AG04449 (cell line): ENCODE measurements at regions of chr6 and their contacts with region 1.

Region 1: DNA sequence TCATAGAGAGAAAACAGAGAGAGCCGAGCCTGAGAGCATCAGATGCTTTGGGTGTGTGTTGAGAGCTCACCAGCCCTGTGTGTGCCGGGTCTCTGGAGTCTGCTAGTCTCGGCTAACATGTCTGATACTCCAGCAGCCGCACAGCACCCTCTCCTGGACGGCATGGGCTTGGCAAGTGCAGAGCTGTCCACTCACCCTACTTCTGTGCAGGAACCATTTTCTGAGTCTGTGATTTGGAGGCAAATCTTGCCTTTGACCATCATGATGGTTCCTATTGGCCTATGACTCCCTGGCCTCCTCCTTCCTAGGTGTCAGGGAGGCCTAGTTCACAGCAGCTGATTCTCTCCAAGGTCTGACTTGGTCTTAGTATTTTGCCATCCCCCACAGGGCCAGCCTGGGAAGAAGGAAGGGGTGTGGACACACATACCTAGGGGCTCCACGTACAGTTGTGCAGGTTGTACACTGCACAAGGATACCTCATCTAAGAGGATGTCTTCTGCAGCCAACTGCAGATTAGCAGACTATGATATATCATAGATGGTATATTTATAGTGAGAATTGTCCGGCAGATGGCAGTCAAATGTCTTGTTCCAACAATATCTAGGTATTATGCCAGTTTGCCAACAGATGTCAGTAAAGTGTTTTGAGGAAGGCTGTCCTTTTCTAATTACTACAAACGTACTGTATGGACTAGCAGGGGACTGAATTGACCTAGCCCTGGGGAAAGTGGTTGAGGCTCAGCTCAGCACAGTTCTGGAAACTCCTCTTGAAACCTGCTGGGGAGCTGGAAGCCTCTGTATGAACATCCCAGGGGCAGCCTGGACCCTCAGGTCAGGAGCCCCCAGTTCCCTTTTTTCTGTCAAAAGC is 13.0 kb downstream of the FGD2 start:
- DNase-seq: peak; percentile 42
- H3K4me3 ChIP-seq: no peak overlapping the region
- CTCF ChIP-seq: peak; percentile 96

Region 2: DNA sequence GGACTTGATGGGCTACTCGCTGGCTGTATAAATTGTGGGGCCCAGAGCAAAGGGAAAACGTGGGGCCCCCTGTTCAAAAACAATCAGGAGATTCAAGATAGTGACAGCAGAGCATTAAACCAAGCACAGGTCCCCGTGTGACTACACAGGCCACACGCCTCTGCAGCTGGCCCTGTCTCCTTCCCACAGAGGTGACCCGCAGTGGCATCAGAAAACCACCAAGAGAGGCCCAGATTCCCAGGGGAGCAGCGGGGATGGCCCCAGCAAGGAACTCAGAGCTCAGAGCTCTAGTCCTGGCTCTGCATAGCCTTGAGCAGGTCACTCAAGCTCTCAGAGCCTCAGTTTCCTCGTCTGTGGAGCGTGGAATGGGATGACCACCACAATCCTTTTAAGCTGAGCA is 236.8 kb before region 1 on chr6:
- CTCF ChIA-PET with region 1: interaction called, 521 read pairs
- POLR2A ChIA-PET with region 1: no interaction called
- DNase-seq: no peak
- H3K4me3 ChIP-seq: no peak overlapping the region
- CTCF ChIP-seq: no peak

Region 3: DNA sequence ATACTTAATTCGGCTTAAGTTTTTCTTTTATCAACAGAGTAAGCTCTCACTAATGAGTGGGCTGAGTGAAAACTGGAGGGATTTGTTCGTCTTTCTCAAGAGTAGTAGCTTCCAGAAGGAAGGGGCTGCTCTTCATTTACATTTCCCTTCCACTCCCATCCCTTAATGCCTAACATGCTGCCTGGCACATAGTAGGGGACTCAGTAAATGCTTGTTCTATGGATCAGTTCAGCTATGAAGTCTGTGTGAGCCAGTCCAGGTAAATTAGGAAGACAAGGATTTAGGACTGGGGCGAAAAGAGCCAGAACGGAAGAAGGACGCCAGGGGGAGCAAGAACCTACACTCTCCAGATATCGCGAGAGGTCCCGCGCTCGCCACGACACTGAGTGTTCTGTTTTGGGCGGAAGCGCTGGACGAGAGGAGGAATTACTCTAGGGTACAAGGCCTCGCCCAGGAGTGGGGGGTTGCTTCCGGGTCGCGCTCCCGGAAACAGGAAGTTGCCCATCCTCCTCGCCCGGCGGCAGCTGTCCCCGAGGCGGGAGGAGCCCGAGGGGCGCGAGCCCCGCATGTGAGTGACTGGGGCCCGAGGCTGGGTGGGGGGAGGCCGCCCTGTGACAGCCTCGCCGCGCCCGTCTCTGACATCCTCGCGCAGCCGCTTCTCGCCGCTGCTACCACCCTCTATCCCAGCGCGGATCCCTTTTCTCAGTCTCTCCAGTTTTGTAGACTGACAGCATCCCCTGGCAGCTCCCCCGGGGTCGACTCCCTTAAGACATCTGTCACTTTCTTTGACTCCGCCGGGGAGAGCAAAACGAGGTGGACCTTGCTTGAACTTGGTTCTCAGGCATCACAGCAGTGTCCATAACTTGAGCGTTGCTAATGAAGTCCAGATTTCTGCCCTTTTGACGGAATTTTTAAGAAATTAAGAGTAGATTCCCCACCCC is 132.7 kb before region 1 on chr6 and contains the start of gene C6orf89:
- CTCF ChIA-PET with region 1: interaction called, 270 read pairs
- POLR2A ChIA-PET with region 1: interaction called, 3 read pairs
- DNase-seq: peak; percentile 77
- H3K4me3 ChIP-seq: peak within 1 kb of the TSS; percentile 86
- CTCF ChIP-seq: peak; percentile 81

Region 4: DNA sequence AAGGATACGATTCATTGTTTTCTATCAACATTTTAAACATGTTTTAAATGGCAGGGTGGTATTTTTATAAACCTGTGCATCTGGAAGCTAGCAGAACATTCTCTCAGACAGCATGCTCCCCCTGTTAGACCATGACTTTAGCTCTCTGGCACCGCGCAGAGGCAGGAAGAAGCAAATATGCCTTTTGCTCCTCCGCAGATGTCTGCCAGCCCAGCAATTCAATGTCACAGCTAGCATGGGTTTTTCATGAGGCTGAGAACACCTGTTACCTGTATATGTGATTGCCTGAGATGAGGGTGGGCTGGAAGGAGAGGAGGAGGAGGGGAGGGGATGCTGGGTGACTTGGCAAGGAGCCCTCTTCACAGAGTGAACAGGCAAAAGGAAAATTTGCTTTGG is 39.1 kb before region 1 on chr6:
- CTCF ChIA-PET with region 1: interaction called, 21 read pairs
- POLR2A ChIA-PET with region 1: interaction called, 3 read pairs
- DNase-seq: no peak
- H3K4me3 ChIP-seq: no peak overlapping the region
- CTCF ChIP-seq: peak; percentile 86

Region 5: DNA sequence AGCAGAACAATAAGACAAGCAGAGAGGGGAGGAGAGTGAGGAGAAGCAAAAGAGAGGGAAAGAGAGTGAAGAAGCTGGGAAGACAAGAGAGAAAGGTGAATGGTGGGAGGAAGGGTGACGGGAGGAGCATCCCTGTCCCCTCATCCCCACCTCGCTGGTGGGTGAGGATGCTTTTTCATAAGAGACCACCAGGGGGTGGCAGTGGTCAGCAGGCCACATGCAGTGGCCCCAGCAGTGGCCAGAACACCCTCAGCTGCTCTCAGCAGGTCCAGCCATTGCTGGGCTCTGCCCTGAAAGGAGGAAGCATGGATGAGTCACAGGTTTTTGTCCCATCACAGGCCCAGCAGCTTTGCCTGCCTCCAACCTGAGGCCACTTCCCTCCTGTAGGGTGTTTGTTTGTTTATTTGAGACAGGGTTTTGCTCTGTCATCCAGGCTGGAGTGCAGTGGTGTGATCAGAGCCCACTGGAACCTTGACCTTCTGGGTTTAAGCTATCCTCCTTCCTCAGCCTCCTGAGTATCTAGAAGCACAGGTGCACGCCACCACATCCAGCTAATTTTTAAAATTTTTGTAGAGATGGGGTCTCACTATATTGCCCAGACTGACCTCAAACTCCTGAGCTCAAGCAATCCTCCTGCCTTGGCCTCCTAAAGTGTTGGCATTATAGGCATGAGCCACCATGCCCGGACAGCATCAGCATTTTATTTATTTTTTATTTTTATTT is 11.0 kb after region 1 on chr6:
- CTCF ChIA-PET with region 1: interaction called, 182 read pairs
- POLR2A ChIA-PET with region 1: no interaction called
- DNase-seq: no peak
- H3K4me3 ChIP-seq: no peak overlapping the region
- CTCF ChIP-seq: peak; percentile 79

Region 6: DNA sequence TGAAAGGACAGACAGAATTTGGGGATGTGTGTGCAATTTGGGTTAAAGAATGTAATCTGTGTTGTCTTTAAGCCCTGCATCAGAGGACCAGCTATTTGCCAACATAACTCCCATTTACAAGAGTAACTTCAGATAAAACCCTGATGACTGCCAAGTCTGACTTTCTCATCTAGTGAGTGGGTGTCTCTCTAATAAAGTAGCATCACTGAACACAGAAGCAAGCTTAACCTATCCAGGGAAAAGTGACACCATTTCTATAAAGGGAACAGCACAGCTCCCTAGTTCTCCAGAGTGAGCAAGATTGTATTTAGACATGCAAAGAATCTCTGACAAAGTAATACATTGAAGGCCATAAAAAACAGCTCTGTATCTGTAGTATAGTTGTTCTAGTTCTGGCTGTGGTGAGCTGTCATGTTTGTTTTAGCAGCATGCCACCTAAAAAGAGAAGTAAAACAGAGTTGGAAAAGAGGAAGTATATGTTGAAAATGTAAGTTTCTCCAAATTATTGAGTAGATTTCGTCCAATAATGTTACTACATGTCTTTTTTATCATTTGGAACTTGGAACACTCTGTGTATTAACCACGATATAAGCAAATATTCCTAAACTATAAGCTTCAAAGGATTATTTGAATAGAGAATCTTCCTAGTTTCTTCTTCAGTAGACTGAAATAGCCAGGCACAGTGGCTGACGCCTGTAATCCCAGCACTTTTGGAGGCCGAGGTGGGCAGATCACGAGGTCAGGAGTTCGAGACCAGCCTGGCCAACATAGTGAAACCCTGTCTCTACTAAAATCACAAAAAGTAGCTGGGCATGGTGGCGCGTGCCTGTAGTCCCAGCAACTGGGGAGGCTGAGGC is 142.7 kb after region 1 on chr6:
- CTCF ChIA-PET with region 1: interaction called, 18 read pairs
- POLR2A ChIA-PET with region 1: no interaction called
- DNase-seq: peak; percentile 64
- H3K4me3 ChIP-seq: no peak overlapping the region
- CTCF ChIP-seq: no peak

Region 7: GRCh38 chr6:37222125-37222967 is 203.9 kb after region 1 on chr6:
- CTCF ChIA-PET with region 1: interaction called, 1,706 read pairs
- POLR2A ChIA-PET with region 1: no interaction called
- DNase-seq: no peak
- H3K4me3 ChIP-seq: peak overlapping the region; percentile 64
- CTCF ChIP-seq: no peak

Region 8: DNA sequence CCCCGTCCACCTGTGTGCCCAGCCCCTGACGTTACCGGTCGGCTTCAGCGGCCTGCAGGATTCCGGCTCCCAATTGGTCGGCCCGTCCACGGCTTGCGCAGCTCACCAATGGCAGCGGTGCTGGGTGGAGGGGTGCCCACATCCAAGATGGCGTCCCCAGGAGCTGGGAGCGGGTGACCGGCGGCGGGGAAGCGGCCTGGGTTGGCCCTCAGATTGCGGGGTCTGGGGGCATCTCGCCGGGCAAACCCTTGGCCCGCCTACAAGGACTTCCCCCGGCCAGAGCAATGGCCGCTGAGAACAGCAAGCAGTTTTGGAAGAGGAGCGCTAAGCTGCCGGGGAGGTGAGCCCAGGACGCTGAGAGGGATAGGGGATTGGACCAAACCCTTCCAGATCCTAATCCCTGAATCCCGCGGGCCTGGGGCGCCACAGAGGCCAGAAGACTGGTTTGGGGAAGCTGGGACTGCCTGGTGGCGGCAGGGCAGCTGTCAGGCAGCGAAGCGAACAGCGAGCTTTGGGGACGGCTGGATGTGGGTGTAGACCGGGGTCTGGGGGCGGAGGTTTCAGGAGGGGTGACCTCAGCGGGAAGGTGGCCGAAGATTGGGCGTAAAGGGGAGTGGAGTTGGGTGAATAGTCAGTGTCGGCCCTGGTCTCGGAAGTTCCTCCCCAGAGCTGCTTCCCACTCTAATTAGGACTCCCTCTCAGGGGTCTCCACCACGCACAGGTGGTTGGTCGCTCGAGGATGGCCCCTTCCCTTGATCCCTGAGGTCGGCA is 239.4 kb after region 1 on chr6 and contains the starts of genes TBC1D22B and TMEM217:
- CTCF ChIA-PET with region 1: no interaction called
- POLR2A ChIA-PET with region 1: no interaction called
- DNase-seq: peak; percentile 59
- H3K4me3 ChIP-seq: peak within 1 kb of the TSS; percentile 93
- CTCF ChIP-seq: no peak